HCT116 (cell line): ENCODE measurements at regions of chr2 and their contacts with region 1.

Region 1: GRCh38 chr2:130316596-130316995 is 26.1 kb upstream of the IMP4 start:
- DNase-seq: no peak
- ATAC-seq: no peak
- H3K4me3 ChIP-seq: no peak overlapping the region
- H3K27ac ChIP-seq: no peak overlapping the region
- H3K4me1 ChIP-seq: no peaks in the 10 kb centered on the region
- H3K27me3 ChIP-seq: peaks cover 3% of the 10 kb centered on the region; the same call in 1 of the 2 replicates
- CTCF ChIP-seq: no peak
- POLR2A ChIP-seq: no peak
- RAD21 ChIP-seq: no peak

Region 2: GRCh38 chr2:130019402-130019801 is 297.2 kb before region 1 on chr2:
- CTCF ChIA-PET with region 1: no interaction called
- POLR2A ChIA-PET with region 1: no interaction called
- RAD21 ChIA-PET with region 1: no interaction called
- intact Hi-C with region 1: loop called (anchors 10 kb)
- DNase-seq: no peak
- ATAC-seq: no peak
- H3K4me3 ChIP-seq: no peak overlapping the region
- H3K27ac ChIP-seq: no peak overlapping the region
- H3K4me1 ChIP-seq: no peaks in the 10 kb centered on the region
- H3K27me3 ChIP-seq: peaks cover 8% of the 10 kb centered on the region; the same call in 1 of the 2 replicates
- CTCF ChIP-seq: no peak
- POLR2A ChIP-seq: no peak
- RAD21 ChIP-seq: no peak